ENCODE measurements at regions of chr3 and their contacts with region 1.

Region 1: DNA sequence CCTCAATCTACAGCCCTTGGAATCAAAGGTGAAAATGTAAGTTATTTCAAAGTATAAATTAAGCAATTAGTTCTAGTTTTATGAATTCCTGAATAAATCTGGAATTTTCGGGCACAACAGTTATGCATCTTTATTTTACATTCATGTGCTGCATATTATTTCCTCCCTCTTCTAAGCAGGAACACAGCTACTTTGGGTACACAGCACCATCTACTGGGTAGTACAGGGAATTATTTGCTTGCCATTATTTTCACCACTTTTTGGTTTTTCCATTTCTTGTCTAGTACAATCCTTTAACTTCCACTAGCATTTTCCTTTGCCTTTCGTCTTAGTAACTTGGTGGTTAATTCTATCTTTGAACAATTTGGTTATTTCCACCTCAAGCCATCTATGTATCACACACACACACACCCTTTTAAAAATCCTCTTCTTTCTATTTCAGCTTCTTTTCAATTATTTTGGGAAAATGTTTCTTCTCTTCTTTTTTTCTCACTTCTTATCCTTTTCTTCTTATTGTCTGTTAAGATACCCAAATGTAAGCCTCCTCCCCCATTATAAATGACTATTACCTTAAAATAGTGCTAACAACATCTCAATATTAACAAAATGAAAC is 451.0 kb downstream of the MFSD1 start:
- DNase-seq: peak; percentile 55
- H3K4me3 ChIP-seq: no peak overlapping the region
- H3K27ac ChIP-seq: no peak overlapping the region
- H3K4me1 ChIP-seq: no peaks in the 10 kb centered on the region
- H3K27me3 ChIP-seq: peaks cover 15% of the 10 kb centered on the region
- CTCF ChIP-seq: peak; percentile 70

Region 2: GRCh38 chr3:158918008-158918407 is 334.9 kb before region 1 on chr3:
- CTCF ChIA-PET with region 1: interaction called, 5 read pairs
- POLR2A ChIA-PET with region 1: no interaction called
- intact Hi-C with region 1: loop called (anchors 2 kb)
- DNase-seq: peak; percentile 73
- H3K4me3 ChIP-seq: no peak overlapping the region
- H3K27ac ChIP-seq: no peak overlapping the region
- H3K4me1 ChIP-seq: no peaks in the 10 kb centered on the region
- H3K27me3 ChIP-seq: peaks cover 5% of the 10 kb centered on the region
- CTCF ChIP-seq: peak; percentile 79

Region 3: DNA sequence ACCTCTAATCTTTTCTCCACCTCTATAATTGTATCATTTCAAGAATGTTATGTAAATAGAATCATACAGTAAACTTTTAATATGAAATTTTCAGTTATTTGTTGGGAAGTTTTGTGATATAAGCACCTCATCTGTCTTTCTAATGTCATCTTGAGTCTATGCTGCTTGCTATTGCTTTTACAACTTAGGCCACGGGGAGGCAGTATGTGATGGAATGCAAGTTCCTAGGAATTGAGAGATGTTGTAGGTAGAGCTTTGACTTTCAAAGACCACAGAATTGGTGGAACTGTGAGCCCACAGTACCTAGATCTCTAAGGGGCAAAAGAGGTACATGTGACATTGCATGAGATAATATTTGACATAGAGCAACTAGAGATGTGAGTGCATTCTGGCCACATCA is 122.8 kb before region 1 on chr3:
- CTCF ChIA-PET with region 1: no interaction called
- POLR2A ChIA-PET with region 1: no interaction called
- intact Hi-C with region 1: loop called (anchors 5 kb)
- DNase-seq: peak; percentile 11
- H3K4me3 ChIP-seq: no peak overlapping the region
- H3K27ac ChIP-seq: no peak overlapping the region
- H3K4me1 ChIP-seq: no peaks in the 10 kb centered on the region
- H3K27me3 ChIP-seq: no peaks in the 10 kb centered on the region
- CTCF ChIP-seq: peak; percentile 62

Region 4: DNA sequence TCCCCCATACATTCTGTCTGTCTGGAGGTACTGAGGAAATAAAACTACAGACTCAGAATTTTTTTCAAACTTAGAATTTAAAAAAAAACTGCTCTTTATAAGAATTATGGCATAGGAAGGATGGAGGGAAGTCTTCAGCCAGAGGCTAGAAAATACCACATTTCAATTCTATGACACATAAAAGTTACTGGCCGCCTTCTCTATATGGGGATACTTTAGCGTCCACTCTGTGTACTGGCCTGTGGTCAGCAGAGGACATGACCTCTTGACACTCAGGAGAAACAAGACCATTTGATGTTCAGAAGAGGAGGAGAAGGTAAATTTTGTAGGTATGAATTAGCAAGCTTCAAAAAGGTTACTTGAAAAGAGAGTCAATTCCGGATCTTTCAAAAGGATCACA is 33.6 kb before region 1 on chr3:
- CTCF ChIA-PET with region 1: no interaction called
- POLR2A ChIA-PET with region 1: no interaction called
- intact Hi-C with region 1: no loop called
- DNase-seq: no peak
- H3K4me3 ChIP-seq: no peak overlapping the region
- H3K27ac ChIP-seq: no peak overlapping the region
- H3K4me1 ChIP-seq: no peaks in the 10 kb centered on the region
- H3K27me3 ChIP-seq: peaks cover 9% of the 10 kb centered on the region
- CTCF ChIP-seq: no peak